Aorta (tissue), 5 donors: ENCODE measurements at regions of chr15 and their contacts with region 1.

Region 1: GRCh38 chr15:73273181-73274002 is 95.4 kb downstream of the HCN4 start:
- DNase-seq: no peak
- ATAC-seq: peak; percentile 83
- H3K4me3 ChIP-seq: no peak overlapping the region
- H3K27ac ChIP-seq: no peak overlapping the region
- H3K4me1 ChIP-seq: no peaks in the 10 kb centered on the region
- H3K27me3 ChIP-seq: no peaks in the 10 kb centered on the region

Region 2: DNA sequence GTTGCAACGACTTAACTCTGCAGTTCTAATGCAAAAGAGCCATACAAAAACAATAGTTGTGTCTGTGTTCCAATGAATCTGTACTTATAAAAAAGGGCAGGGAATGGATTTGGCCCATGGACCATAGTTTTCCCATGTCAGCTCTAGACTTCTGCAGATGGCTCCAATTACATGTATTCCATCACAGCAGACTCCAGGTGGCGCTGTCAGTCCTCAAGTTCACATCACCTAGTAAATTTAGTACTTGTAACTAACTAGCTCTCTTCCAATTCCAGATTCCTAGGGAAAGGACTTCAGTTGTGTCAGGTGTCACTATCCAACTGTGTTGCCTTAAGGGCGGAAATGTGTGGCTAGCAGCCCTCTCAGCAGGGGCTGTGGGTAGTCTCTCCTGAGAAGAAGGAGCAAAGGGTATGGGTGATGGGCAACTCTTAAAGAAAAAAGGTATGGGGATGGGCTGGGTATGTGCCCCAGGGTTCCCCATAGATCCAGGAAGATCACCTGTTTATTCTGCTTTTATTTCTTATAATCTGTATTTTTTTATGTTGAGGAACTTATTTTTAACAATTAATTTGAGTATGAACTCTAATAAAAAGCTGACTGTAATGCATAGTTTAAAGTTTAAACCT is 551.2 kb before region 1 on chr15:
- intact Hi-C with region 1: loop called in 1 of 2 experiments (anchors 10 kb)
- DNase-seq: peak; percentile 75 to 83
- ATAC-seq: no peak
- H3K4me3 ChIP-seq: no peak overlapping the region
- H3K27ac ChIP-seq: no peak overlapping the region
- H3K4me1 ChIP-seq: no peaks in the 10 kb centered on the region
- H3K27me3 ChIP-seq: no peaks in the 10 kb centered on the region

Region 3: GRCh38 chr15:72783563-72784237 is 489.7 kb before region 1 on chr15 and contains the start of gene ADPGK:
- intact Hi-C with region 1: loop called (anchors 10 kb)
- DNase-seq: peak; percentile 94 to 97
- ATAC-seq: peak; percentile 99
- H3K4me3 ChIP-seq: peak within 1 kb of the TSS; percentile 63 to 75
- H3K27ac ChIP-seq: peak within 1 kb of the TSS; percentile 85 to 97
- H3K4me1 ChIP-seq: peaks cover 0 to 3% of the 10 kb centered on the region in 2 donors
- H3K27me3 ChIP-seq: no peaks in the 10 kb centered on the region
- total RNA-seq, gene ADPGK: 46.9 to 52.1 TPM

Region 4: GRCh38 chr15:73196113-73196512 is 77.3 kb before region 1 on chr15:
- intact Hi-C with region 1: no loop called
- DNase-seq: no peak
- ATAC-seq: no peak
- H3K4me3 ChIP-seq: no peak overlapping the region
- H3K27ac ChIP-seq: no peak overlapping the region
- H3K4me1 ChIP-seq: peaks cover 0 to 4% of the 10 kb centered on the region in 2 donors
- H3K27me3 ChIP-seq: no peaks in the 10 kb centered on the region

Region 5: GRCh38 chr15:73240866-73241499 is 32.4 kb before region 1 on chr15:
- intact Hi-C with region 1: loop called (anchors 2 to 5 kb)
- DNase-seq: peak; percentile 67 to 77
- ATAC-seq: no peak
- H3K4me3 ChIP-seq: no peak overlapping the region
- H3K27ac ChIP-seq: no peak overlapping the region
- H3K4me1 ChIP-seq: peaks cover 0 to 3% of the 10 kb centered on the region in 2 donors
- H3K27me3 ChIP-seq: no peaks in the 10 kb centered on the region